RWPE1 (cell line): ENCODE measurements at regions of chr5 and their contacts with region 1.

Region 1: GRCh38 chr5:140346348-140347101 is at the start of gene HBEGF:
- DNase-seq: peak; percentile 94
- H3K27ac ChIP-seq: peak within 1 kb of the TSS; percentile 55
- CTCF ChIP-seq: peak; percentile 65

Region 2: GRCh38 chr5:140244525-140245025 is 102.0 kb before region 1 on chr5:
- CTCF ChIA-PET with region 1: interaction called, 61 read pairs
- POLR2A ChIA-PET with region 1: interaction called, 17 read pairs
- DNase-seq: peak; percentile 83
- H3K27ac ChIP-seq: peak overlapping the region; percentile 53; the same call in 1 of the 2 replicates
- CTCF ChIP-seq: peak; percentile 93

Region 3: DNA sequence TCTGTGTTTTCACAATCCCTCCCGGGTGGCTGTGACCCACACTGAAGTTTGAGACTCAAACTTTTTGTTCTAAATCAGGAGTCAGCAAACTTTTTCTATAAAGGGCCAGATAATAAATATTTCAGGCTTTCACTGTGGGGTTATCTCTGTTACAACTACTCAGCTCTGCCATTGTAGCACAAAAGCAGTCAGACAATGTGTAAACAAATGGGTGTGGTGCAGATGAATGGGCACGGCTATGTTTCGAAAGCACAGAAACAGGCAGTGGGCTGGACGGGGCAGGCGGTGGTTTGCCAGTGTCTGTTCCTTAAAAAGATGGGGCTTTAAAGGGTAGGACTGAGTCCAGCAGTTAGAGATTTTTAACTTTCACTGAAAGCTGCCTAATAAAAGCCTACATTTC is 92.6 kb before region 1 on chr5:
- CTCF ChIA-PET with region 1: interaction called, 12 read pairs
- POLR2A ChIA-PET with region 1: interaction called, 4 read pairs
- DNase-seq: peak; percentile 59
- H3K27ac ChIP-seq: peak overlapping the region; percentile 3; the same call in 1 of the 2 replicates
- CTCF ChIP-seq: no peak

Region 4: DNA sequence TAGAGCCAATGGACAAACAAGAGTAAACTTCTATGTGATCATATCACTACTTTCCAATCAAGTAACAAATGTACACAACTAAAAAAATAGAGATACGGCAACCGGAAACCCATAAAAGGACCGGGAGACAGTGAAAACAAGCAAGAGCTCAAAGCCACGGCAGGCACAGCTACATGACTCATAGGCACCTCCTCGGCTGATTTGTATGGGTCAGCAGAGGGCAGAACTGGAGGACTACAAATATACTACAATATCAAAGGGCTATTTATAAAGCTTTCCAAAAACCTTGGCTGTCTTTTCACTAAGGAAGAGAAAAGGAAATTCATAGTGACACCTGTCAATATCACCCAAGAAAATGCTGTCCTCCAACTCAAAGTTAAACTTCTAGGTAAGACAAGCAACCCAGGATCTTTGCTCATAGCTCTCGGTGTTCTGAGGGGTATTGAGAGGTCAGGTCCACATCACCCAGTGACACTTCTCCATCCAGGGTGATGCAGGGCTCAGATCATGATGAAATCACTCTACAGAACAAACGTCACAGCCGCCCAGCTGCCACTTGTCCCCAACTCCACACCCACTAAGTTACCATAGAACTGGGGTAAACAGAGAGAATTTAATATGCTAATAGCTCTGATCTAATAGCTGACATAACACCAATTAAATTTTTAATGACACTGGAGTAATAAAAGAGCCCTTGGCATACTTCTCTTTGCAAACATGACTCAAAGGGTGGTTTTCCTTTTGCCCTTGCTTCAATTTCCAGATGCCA is 84.9 kb before region 1 on chr5:
- CTCF ChIA-PET with region 1: interaction called, 11 read pairs
- POLR2A ChIA-PET with region 1: interaction called, 5 read pairs
- DNase-seq: peak; percentile 97
- H3K27ac ChIP-seq: 0 out of 2 replicates have a peak overlapping the region, but pooled peaks have one; percentile 30
- CTCF ChIP-seq: no peak